Adrenal gland (tissue), 19 donors: ENCODE measurements at regions of chr6 and their contacts with region 1.

Region 1: GRCh38 chr6:134161036-134161435 is 108.6 kb upstream of the SLC2A12 start:
- DNase-seq: no peak
- H3K4me3 ChIP-seq: no peak overlapping the region
- H3K27ac ChIP-seq: no peak overlapping the region
- H3K4me1 ChIP-seq: no peaks in the 10 kb centered on the region
- H3K27me3 ChIP-seq: no peaks in the 10 kb centered on the region
- CTCF ChIP-seq: no peak
- POLR2A ChIP-seq: no peak

Region 2: DNA sequence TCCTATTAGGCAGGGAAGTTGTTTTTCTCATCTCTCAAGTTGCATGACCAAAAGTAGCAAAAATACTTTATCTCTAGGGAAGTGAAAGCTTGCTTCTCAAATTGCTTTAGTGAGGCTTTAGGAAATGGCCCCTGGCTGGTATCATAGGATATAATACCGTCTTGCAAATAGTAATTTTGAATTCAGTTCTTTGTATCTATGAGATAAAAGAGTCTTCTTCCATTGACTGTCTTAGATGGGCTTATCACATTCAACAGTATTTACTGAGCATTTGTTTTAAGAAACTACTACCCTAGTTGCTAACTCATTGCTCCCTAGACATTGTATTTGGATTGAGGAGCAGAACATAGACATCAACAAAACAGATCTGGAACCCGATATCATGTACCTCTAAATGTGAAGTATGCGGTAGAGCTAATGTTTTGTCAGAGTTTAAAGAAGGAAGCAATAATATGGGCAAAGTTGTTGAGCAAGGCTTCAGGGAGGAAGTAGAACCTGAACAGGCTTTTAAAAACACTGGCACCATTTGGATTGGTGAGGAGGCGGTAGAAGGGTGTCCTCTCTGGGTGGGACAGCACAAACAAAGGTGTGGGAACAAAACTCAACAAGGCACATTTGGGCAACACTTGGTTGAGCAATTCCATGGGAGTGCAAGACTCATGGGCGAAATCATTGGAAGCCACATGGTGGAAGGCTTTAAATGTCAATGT is 55.4 kb after region 1 on chr6:
- intact Hi-C with region 1: no loop called
- DNase-seq: no peak
- H3K4me3 ChIP-seq: no peak overlapping the region
- H3K27ac ChIP-seq: peak overlapping the region in 2 of 5 donors; percentile 13 to 63
- H3K4me1 ChIP-seq: no peaks in the 10 kb centered on the region
- H3K27me3 ChIP-seq: no peaks in the 10 kb centered on the region
- CTCF ChIP-seq: no peak
- POLR2A ChIP-seq: no peak

Region 3: DNA sequence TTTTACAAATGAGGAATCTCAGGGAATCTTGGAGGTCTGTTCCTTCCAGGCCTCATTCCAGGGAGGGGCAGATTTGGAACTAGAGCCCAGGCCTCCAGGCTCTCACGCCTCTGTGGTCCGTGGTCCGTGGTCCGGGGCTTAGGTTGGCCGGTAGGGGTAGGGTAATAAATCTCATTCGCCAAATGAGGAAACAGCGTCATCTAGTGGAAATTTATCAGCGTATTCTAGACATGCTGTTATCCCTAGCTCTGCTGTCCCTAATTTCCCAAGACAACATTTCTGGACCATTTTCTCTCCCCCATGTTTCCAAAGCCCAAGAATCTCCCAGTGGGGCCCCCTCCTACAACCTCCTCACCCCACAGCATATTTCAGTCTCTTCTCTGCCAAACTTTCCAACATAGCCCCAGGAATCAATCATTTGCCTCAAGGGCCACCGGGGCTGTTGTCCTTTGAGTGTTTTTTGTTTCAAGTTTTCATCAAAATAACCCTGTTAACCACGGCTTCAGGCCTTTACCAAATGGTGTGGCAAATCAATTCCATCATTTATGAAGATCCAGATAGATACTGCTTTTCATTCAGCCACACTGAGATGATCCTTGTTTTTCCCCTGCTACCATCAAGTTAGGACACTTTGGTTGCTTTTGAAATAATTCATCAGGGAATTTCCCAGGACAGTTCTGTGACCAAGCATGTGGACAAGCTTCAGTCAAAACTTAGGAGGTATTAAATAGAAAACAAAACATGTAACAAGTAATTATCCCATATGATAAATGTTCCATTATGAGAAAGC is 662.1 kb after region 1 on chr6:
- intact Hi-C with region 1: loop called (anchors 5 kb)
- DNase-seq: peak; percentile 22 to 63 (median 49)
- H3K4me3 ChIP-seq: no peak overlapping the region
- H3K27ac ChIP-seq: peak overlapping the region in 1 of 5 donors; percentile 44
- H3K4me1 ChIP-seq: peaks cover 0 to 10% of the 10 kb centered on the region in 2 donors
- H3K27me3 ChIP-seq: no peaks in the 10 kb centered on the region
- CTCF ChIP-seq: peak; percentile 65 to 99 (median 94)
- POLR2A ChIP-seq: no peak

Region 4: DNA sequence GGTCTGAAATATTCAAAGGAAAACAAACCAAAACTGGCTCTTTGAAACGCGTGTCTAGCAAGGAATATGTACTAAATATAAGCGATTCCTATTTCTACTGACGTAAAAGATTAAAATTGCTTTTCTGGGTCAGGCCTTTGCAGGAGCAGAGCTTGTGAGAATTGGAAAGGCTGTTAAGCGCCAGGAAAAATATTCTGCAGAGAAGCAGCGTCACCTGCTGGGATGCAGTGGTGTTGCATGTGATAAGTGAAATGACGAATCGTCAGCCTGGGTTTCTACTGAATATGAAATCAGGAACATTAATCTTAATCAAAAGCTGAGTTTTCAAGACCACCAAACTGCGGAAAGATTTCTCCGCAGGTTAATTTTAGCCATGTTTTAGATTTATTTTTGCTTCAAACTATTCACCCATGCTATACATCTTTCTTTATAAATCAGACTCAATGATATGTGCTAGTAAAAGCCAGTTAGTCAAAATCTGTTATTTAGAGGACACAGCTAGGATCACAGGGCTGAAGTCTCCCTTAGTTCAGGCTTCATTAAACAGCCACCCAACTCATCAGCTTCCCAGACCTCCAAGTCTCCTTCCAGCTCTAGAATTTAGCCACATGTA is 721.5 kb after region 1 on chr6:
- intact Hi-C with region 1: loop called in 1 of 2 experiments (anchors 5 kb)
- DNase-seq: peak; percentile 52 to 95 (median 68)
- H3K4me3 ChIP-seq: no peak overlapping the region
- H3K27ac ChIP-seq: peak overlapping the region in 1 of 5 donors; percentile 28
- H3K4me1 ChIP-seq: no peaks in the 10 kb centered on the region
- H3K27me3 ChIP-seq: no peaks in the 10 kb centered on the region
- CTCF ChIP-seq: peak; percentile 52 to 98 (median 98)
- POLR2A ChIP-seq: no peak